ENCODE measurements at regions of chr1 and their contacts with region 1.

Region 1: DNA sequence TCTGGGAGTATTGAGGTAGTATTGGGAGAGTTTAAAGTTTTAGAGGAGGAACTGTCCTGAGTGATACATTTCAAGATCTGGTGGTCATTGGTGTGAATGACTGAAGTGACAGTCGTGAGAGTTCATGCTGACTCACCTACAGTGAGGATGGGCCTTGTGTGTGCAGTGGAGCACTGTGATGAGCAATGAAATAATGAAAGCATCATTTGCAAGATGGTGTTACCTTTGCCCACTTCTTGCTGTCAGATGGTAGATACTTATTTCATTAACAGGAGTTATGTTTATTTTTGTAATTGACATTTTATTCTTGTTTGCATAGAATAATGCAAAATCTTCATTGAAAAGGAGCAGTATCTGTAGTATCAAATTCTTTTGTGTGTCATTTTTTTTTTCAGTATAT is 29.0 kb downstream of the POU2F1 start:
- DNase-seq: no peak
- ATAC-seq: peak; percentile 78
- H3K4me3 ChIP-seq: no peak overlapping the region
- H3K27ac ChIP-seq: no peak overlapping the region
- H3K4me1 ChIP-seq: peaks cover 23% of the 10 kb centered on the region
- H3K27me3 ChIP-seq: no peaks in the 10 kb centered on the region
- CTCF ChIP-seq: no peak
- EP300 ChIP-seq: no peak
- POLR2A ChIP-seq: no peak
- RAD21 ChIP-seq: no peak

Region 2: GRCh38 chr1:167227934-167228378 is 21.7 kb before region 1 on chr1:
- CTCF ChIA-PET with region 1: interaction called, 26 read pairs
- POLR2A ChIA-PET with region 1: interaction called, 9 read pairs
- RAD21 ChIA-PET with region 1: interaction called, 10 read pairs
- SMC1A ChIA-PET with region 1: interaction called, 57 read pairs
- in situ Hi-C with region 1: no loop called
- intact Hi-C with region 1: no loop called
- DNase-seq: no peak
- ATAC-seq: no peak
- H3K4me3 ChIP-seq: no peak overlapping the region
- H3K27ac ChIP-seq: no peak overlapping the region
- H3K4me1 ChIP-seq: peaks cover 12% of the 10 kb centered on the region; the same call in 1 of the 2 replicates
- H3K27me3 ChIP-seq: no peaks in the 10 kb centered on the region
- CTCF ChIP-seq: no peak
- EP300 ChIP-seq: no peak
- POLR2A ChIP-seq: no peak
- RAD21 ChIP-seq: no peak

Region 3: DNA sequence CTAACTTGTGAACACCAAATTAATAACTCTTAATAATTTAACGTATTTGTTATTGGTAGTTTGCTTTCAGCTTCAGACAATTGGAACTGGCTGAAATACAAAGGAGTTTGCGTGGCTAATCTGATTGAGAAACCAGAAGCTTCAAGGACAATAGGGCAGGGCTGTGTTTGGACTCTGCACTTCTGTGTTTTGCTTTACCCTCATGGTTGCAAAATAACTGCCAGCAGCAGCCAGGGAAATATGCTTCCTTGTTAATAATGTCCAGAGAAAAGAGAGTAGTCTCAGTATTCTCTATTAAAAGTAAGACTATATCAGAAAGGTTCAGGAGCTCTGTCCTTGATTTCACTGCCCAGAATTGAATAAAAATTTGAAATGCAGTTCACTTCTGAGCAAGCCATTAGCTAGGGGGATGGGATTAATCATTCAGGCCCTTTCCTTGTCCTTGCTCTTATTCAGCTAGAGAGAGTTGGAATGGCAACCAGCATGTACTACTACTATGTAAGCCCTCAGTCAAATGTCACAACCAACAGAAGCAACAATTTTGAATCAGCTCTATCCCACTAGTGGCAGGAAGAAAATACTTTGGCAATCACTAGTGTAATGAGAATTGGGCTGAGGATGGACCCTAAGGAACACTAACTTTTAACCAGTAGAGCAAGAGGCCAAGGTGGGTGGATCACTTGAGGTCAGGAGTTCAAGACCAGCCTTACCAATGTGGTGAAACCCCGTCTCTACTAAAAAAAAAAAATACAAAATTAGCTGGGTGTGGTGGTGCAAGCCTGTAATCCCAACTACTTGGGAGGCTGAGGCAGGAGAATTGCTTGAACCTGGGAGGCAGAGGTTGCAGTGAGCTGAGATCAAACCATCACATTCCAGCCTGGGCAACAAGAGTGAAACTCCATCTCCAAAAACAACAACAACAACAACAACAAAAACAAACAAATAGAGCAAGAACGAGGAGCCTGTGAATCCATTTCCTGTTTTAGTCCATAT is 47.8 kb after region 1 on chr1:
- CTCF ChIA-PET with region 1: no interaction called
- POLR2A ChIA-PET with region 1: no interaction called
- RAD21 ChIA-PET with region 1: no interaction called
- SMC1A ChIA-PET with region 1: interaction called, 3 read pairs
- in situ Hi-C with region 1: loop called (anchors 5 kb)
- intact Hi-C with region 1: no loop called
- DNase-seq: no peak
- ATAC-seq: 0 out of 3 replicates have a peak, but pooled peaks have one; percentile 22
- H3K4me3 ChIP-seq: no peak overlapping the region
- H3K27ac ChIP-seq: no peak overlapping the region
- H3K4me1 ChIP-seq: no peaks in the 10 kb centered on the region
- H3K27me3 ChIP-seq: no peaks in the 10 kb centered on the region
- CTCF ChIP-seq: no peak
- EP300 ChIP-seq: no peak
- POLR2A ChIP-seq: no peak
- RAD21 ChIP-seq: no peak

Region 4: GRCh38 chr1:167430134-167430856 is 180.6 kb after region 1 on chr1:
- CTCF ChIA-PET with region 1: no interaction called
- POLR2A ChIA-PET with region 1: no interaction called
- RAD21 ChIA-PET with region 1: no interaction called
- SMC1A ChIA-PET with region 1: no interaction called
- in situ Hi-C with region 1: no loop called
- intact Hi-C with region 1: no loop called
- DNase-seq: no peak
- ATAC-seq: peak; percentile 26
- H3K4me3 ChIP-seq: no peak overlapping the region
- H3K27ac ChIP-seq: no peak overlapping the region
- H3K4me1 ChIP-seq: peaks cover 27% of the 10 kb centered on the region
- H3K27me3 ChIP-seq: no peaks in the 10 kb centered on the region
- CTCF ChIP-seq: no peak
- EP300 ChIP-seq: no peak
- POLR2A ChIP-seq: no peak
- RAD21 ChIP-seq: no peak

Region 5: DNA sequence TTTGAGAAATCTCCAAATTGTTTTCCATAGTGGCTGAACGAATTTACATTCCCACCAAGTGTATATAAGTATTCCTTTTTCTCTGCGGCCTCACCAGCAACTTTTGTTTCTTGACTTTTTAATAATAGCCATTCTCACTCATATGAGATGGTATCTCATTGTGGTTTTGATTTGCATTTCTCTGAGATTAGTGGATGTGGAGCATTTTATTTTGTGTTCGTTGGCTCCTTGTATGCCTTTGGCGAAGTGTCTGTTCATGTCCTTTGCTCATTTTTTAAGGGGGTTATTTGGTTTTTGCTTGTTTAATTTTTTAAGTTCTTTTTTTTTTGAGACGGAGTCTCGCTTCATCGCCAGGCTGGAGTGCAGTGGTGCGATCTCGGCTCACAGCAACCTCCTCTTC is 732.2 kb after region 1 on chr1:
- CTCF ChIA-PET with region 1: no interaction called
- POLR2A ChIA-PET with region 1: no interaction called
- RAD21 ChIA-PET with region 1: no interaction called
- SMC1A ChIA-PET with region 1: no interaction called
- in situ Hi-C with region 1: no loop called
- intact Hi-C with region 1: no loop called
- DNase-seq: no peak
- ATAC-seq: no peak
- H3K4me3 ChIP-seq: no peak overlapping the region
- H3K27ac ChIP-seq: no peak overlapping the region
- H3K4me1 ChIP-seq: no peaks in the 10 kb centered on the region
- H3K27me3 ChIP-seq: no peaks in the 10 kb centered on the region
- CTCF ChIP-seq: no peak
- EP300 ChIP-seq: no peak
- POLR2A ChIP-seq: no peak
- RAD21 ChIP-seq: no peak